Dorsolateral prefrontal cortex (tissue), 120 donors: ENCODE measurements at regions of chr16 and their contacts with region 1.

Region 1: GRCh38 chr16:2673066-2673999 is 9.0 kb upstream of the KCTD5 start:
- DNase-seq: peak; percentile 89 to 100 (median 95)
- H3K4me3 ChIP-seq: peak overlapping the region; percentile 45 to 98 (median 77)
- H3K27ac ChIP-seq: peak overlapping the region in 58 of 59 donors; percentile 4 to 88 (median 78)
- H3K27me3 ChIP-seq: no peaks in the 10 kb centered on the region
- CTCF ChIP-seq: peak in 4 of 56 donors; percentile 13 to 30 (median 14)

Region 2: DNA sequence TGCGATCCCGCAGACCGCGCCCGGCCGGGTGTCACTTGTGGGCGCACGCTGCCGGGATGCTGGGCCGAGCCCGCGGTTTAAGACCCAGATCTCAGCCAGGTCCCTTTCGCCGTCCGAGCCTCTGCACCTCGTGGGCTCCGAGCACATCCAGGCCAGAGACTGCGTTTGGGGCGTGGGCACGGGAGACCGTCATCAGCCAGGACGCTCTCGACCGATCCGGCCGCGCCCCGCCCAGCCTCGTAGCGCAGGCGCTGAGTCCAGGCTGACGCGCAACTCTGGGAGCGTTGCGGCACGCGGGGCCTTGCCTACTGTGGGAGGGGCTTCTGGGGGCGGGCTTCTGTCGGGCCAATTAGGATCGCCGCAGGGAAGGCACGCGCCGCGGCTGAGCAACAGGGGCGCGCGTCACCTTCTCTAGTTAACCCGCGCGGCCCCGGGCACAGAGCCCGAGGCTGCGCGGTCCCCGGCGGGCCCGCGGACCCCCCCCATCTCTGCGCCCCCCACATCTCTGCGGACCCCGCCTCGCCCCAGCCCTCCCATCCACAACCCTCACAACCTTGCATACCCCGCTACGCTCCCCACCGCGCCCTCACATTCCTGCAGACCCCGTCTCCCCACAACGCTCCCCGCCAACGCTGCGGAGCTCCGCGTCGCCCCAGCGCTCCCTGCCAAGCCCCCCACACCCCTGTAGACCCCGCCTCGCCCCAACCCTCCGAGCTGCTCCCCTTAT is 141.4 kb before region 1 on chr16:
- intact Hi-C with region 1: loop called in 1 of 2 experiments (anchors 10 kb)
- DNase-seq: peak; percentile 96 to 99 (median 98)
- H3K4me3 ChIP-seq: peak overlapping the region; percentile 48 to 91 (median 72)
- H3K27ac ChIP-seq: peak overlapping the region; percentile 42 to 96 (median 87)
- H3K27me3 ChIP-seq: no peaks in the 10 kb centered on the region
- CTCF ChIP-seq: peak in 18 of 56 donors; percentile 5 to 37 (median 25)

Region 3: GRCh38 chr16:2816751-2817339 is 143.5 kb after region 1 on chr16 and contains the start of gene PRSS21:
- intact Hi-C with region 1: no loop called
- DNase-seq: peak in 1 of 10 donors; percentile 22
- H3K4me3 ChIP-seq: no peak within 1 kb of the TSS
- H3K27ac ChIP-seq: no peak within 1 kb of the TSS
- H3K27me3 ChIP-seq: peaks cover 0 to 19% (median 0%) of the 10 kb centered on the region in 45 donors
- CTCF ChIP-seq: no peak
- total RNA-seq, gene PRSS21: 0.62 to 1.6 (median 0.97) TPM in 21 of 120 experiments, not detected in the others

Region 4: DNA sequence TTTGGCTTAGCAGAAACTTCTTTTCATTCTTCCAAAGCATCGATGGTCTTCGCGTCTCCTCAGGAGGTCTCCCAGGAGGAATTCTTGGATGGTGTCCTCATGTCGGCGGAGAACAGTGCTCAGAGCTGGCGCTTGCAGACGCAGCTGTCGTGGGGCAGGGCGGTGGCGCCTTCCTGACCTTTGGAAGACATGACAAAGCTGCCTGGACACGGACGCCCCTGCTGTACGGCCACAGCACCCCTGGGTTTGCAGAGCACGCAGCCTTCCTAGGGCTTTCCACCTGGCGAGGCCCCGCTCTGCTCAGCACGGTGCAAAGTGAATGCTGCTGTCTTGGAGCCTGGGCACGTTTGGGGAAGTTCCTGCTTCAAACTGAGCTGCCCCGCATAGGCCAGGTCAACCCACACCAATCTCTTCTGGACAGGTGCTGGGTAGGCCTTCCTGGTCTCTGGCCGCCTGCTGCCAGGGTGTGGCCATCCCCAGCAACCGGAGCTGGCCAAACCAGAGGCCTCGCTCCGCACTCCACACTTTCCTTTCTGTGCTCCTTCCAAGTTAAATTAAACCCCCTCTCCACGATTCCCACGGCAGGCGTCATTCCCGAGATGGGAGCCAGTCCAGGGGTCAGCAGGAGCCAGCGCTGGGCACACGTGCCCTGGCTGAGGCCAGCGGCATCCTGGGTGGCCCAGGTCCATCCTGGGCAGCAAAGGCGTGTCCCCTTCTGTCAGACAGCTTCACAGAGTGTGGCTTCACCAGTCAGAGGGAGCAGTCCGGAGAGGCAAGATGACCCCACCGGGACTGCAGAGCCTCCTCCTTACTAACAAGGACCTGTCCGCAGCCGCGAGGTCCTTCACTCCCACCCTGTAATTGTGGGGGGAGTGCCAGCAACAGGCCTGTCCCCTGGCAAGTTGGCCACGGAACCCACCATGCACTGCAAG is 275.7 kb after region 1 on chr16:
- intact Hi-C with region 1: no loop called
- DNase-seq: no peak
- H3K4me3 ChIP-seq: no peak overlapping the region
- H3K27ac ChIP-seq: no peak overlapping the region
- H3K27me3 ChIP-seq: no peaks in the 10 kb centered on the region
- CTCF ChIP-seq: no peak